ENCODE measurements at regions of chr1 and their contacts with region 1.

Region 1: GRCh38 chr1:56575865-56576264 is 3.5 kb downstream of the PLPP3 start:
- DNase-seq: no peak

Region 2: DNA sequence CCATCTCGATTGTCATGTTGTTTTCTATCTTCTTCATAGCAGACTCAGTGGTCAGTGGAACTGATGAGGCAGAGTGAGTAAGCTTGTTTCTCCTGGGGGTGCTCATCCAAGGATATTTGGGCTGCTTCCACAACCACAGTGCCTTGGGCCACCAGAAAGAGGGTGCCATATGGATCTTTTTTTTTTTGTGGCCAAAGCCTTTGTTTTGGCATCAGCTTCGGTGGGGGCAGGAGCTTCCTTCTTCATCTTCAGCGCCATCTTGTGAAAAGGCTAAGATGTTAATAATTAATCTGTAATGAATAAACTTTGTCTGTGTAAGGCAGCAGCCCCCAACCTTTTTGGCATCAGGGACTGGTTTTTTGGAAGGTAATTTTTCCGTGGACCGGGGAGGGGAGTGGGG is 10.1 kb after region 1 on chr1:
- CTCF ChIA-PET with region 1: interaction called, 10 read pairs
- POLR2A ChIA-PET with region 1: interaction called, 3 read pairs
- DNase-seq: no peak